ENCODE measurements at regions of chr18 and their contacts with region 1.

Region 1: DNA sequence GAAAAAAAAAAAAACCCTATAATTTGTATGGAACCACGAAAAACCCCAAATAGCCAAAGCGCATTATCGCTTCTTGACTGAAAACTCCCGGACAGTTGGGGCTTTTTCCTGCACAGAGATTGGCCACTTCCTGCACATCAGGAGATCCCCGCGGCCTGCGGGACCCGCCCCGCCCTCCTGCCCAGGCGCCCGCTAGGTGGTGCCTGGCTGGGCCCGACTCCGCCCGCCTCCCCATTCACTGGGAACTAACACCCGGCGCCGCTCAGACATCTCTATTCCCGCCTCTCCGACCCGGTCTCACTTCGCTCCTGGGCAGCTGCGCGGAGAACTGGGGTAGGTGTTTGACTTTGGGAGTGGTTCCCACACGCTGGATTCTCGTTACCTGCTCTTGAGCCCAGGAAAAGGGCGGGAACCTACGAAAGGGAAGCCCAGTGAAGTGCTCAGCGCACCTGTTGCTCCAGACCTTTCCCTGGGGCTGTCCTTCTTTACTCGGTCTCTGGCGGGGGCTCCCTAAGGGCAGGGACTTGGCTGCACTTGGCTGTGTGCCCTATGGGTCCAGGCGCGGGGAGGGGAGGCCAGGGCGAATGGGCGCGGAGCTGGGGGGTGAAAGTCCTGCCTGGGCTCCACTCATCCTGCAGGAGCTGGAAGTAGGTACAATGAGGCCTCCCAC is at the start of gene HMSD:
- DNase-seq: peak; percentile 90
- H3K4me3 Mint-ChIP-seq: peak within 1 kb of the TSS; percentile 88
- H3K27ac Mint-ChIP-seq: peak within 1 kb of the TSS; percentile 91
- H3K4me1 Mint-ChIP-seq: peaks cover 37% of the 10 kb centered on the region
- H3K27me3 Mint-ChIP-seq: peaks cover 15% of the 10 kb centered on the region
- total RNA-seq, gene HMSD: 16.8 and 25.0 TPM in 2 replicates

Region 2: DNA sequence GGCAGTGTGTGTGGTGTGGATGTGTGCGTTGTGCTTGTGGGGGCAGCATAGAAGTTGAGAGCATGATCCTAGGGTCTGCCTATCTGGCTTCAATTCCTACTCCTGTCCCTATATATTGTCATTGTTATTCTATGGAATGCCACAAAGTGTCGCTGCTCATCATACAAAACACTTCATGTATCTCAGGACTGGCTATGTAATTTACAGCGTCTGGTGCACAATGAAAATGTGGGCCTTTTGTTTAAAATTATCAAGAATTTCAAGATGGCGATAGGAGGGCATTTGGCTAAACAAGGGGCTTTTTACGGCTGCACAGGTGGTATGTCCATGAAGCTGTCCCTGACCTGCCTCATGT is 58.3 kb before region 1 on chr18:
- intact Hi-C with region 1: loop called (anchors 1 kb)
- DNase-seq: no peak
- H3K4me3 Mint-ChIP-seq: no peak overlapping the region
- H3K27ac Mint-ChIP-seq: no peak overlapping the region
- H3K4me1 Mint-ChIP-seq: peaks cover 6% of the 10 kb centered on the region
- H3K27me3 Mint-ChIP-seq: peaks cover 16% of the 10 kb centered on the region

Region 3: DNA sequence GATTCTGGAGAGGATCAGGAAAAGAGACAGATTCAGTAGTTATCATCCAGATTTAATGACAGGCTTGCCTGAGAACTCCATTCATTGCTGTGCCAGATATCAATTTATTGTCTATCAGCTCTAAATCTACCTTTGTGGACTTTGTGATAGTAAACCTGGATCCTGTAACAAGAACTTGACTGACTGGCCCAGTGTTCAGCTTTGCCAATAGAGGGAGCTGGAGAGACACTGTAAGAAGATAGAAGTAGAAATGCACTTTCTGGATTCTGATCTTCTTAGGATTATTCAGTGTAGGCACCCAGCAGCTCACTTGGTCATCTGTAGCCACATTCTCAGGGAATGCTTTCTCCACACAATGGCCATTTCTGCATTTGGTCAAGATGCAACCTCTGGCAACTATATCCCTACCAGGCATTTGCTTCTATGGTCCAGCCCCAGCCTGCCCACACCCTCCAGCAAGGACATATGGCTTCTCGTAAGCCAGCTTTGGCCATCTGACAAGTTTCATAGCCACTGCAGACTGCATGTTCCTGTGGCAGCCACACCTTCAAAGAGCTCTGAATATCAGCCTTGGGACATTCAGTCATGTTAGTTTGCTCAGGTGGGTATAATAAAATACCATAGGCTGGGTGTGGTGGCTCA is 14.5 kb after region 1 on chr18:
- intact Hi-C with region 1: loop called (anchors 1 kb)
- DNase-seq: peak; percentile 81
- H3K4me3 Mint-ChIP-seq: no peak overlapping the region
- H3K27ac Mint-ChIP-seq: no peak overlapping the region
- H3K4me1 Mint-ChIP-seq: peaks cover 16% of the 10 kb centered on the region
- H3K27me3 Mint-ChIP-seq: no peaks in the 10 kb centered on the region

Region 4: GRCh38 chr18:63969960-63970802 is 21.0 kb after region 1 on chr18 and contains the start of gene SERPINB8:
- intact Hi-C with region 1: loop called (anchors 1 kb)
- DNase-seq: peak; percentile 94
- H3K4me3 Mint-ChIP-seq: peak within 1 kb of the TSS; percentile 93
- H3K27ac Mint-ChIP-seq: peak within 1 kb of the TSS; percentile 92
- H3K4me1 Mint-ChIP-seq: peaks cover 35% of the 10 kb centered on the region
- H3K27me3 Mint-ChIP-seq: no peaks in the 10 kb centered on the region
- total RNA-seq, gene SERPINB8: 22.0 and 25.5 TPM in 2 replicates

Region 5: GRCh38 chr18:64017870-64018269 is 68.7 kb after region 1 on chr18:
- intact Hi-C with region 1: no loop called
- DNase-seq: no peak
- H3K4me3 Mint-ChIP-seq: no peak overlapping the region
- H3K27ac Mint-ChIP-seq: no peak overlapping the region
- H3K4me1 Mint-ChIP-seq: no peaks in the 10 kb centered on the region
- H3K27me3 Mint-ChIP-seq: peaks cover 2% of the 10 kb centered on the region

Region 6: GRCh38 chr18:64037812-64038414 is 88.7 kb after region 1 on chr18:
- intact Hi-C with region 1: no loop called
- DNase-seq: no peak
- H3K4me3 Mint-ChIP-seq: no peak overlapping the region
- H3K27ac Mint-ChIP-seq: no peak overlapping the region
- H3K4me1 Mint-ChIP-seq: no peaks in the 10 kb centered on the region
- H3K27me3 Mint-ChIP-seq: peaks cover 5% of the 10 kb centered on the region